Activated naive CD8-positive, alpha-beta T cell treated with anti-CD3 and anti-CD28 coated beads, Interleukin-2, amount 10 ng/mL, durations not matched to agents 7 days and 5 days (primary cell): ENCODE measurements at regions of chr17 and their contacts with region 1.

Region 1: DNA sequence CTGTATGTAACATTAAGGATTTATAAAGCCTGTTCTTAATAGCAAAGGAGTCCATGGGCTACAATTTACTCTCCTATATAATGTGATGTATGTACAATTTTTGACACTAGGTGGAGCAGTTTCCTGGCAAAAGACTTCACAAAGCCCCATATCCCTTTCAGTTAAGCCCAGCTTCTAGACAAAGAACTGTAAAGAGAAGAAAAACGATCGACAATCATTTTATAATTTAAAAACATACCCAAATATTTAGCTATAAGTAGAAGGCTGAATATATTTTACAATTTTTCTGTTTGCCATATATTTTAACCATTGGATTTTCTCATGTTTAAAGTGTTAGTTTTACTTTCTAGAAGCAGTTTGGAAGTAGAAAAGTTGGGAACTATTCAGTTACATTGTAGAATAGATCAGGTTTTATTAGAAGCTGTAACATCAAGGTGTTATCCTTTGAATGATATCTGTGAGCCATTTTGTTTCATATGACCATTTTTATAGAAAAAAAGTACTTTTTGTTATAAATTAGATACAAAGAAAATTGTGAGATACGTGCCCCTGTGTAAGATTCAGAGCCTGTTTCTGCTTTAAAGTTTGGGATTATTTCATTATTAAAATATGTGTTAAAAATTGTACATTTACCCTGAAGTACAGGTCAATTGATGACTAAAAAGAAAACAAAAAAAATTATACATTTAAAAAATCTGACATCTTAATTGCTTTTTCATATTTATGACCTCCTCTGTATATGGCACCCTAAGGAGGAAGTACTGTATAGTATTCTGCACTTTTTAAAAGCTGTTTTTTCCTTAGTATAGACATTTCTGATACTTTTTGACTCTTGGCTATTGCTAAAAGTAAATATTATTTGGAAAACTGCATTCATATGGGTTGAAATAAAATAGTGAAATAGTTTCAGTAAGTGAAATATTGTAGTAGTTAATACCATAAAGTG is 46.3 kb downstream of the VMP1 start:
- DNase-seq: no peak
- ATAC-seq: peak; percentile 88
- H3K4me3 Mint-ChIP-seq: peak overlapping the region; percentile 62
- H3K27ac Mint-ChIP-seq: peak overlapping the region; percentile 85
- H3K4me1 Mint-ChIP-seq: peaks cover 39% of the 10 kb centered on the region
- H3K27me3 Mint-ChIP-seq: no peaks in the 10 kb centered on the region

Region 2: GRCh38 chr17:59712862-59713261 is 40.9 kb before region 1 on chr17:
- POLR2A ChIA-PET with region 1: no interaction called
- DNase-seq: no peak
- ATAC-seq: no peak
- H3K4me3 Mint-ChIP-seq: no peak overlapping the region
- H3K27ac Mint-ChIP-seq: no peak overlapping the region
- H3K4me1 Mint-ChIP-seq: peaks cover 23% of the 10 kb centered on the region
- H3K27me3 Mint-ChIP-seq: no peaks in the 10 kb centered on the region

Region 3: DNA sequence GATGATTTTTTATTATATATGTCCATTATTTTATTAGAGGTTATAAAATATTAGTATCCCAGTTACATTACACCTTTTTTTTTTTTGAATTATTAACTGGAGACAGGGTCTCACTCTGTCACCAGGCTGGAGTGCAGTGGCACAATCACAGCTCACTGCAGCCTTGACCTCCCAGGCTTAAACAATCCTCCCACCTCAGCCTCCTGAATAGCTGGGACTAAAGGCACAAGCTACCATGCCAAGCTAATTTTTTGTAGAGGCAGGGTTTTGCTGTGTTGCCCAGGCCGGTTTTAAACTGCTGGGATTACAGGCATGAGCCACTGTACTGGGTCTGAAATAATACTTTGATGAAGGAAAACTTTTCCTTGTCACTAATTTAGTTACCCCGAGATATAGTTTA is 17.3 kb after region 1 on chr17:
- POLR2A ChIA-PET with region 1: no interaction called
- DNase-seq: no peak
- ATAC-seq: no peak
- H3K4me3 Mint-ChIP-seq: no peak overlapping the region
- H3K27ac Mint-ChIP-seq: no peak overlapping the region
- H3K4me1 Mint-ChIP-seq: peaks cover 4% of the 10 kb centered on the region
- H3K27me3 Mint-ChIP-seq: no peaks in the 10 kb centered on the region

Region 4: GRCh38 chr17:59786536-59787319 is 32.9 kb after region 1 on chr17:
- POLR2A ChIA-PET with region 1: interaction called, 11 read pairs
- DNase-seq: no peak
- ATAC-seq: peak; percentile 88
- H3K4me3 Mint-ChIP-seq: peak overlapping the region; percentile 88
- H3K27ac Mint-ChIP-seq: peak overlapping the region; percentile 94
- H3K4me1 Mint-ChIP-seq: peaks cover 44% of the 10 kb centered on the region
- H3K27me3 Mint-ChIP-seq: no peaks in the 10 kb centered on the region

Region 5: GRCh38 chr17:59815965-59816364 is 62.2 kb after region 1 on chr17:
- POLR2A ChIA-PET with region 1: no interaction called
- DNase-seq: no peak
- ATAC-seq: no peak
- H3K4me3 Mint-ChIP-seq: no peak overlapping the region
- H3K27ac Mint-ChIP-seq: no peak overlapping the region
- H3K4me1 Mint-ChIP-seq: peaks cover 28% of the 10 kb centered on the region
- H3K27me3 Mint-ChIP-seq: no peaks in the 10 kb centered on the region

Region 6: DNA sequence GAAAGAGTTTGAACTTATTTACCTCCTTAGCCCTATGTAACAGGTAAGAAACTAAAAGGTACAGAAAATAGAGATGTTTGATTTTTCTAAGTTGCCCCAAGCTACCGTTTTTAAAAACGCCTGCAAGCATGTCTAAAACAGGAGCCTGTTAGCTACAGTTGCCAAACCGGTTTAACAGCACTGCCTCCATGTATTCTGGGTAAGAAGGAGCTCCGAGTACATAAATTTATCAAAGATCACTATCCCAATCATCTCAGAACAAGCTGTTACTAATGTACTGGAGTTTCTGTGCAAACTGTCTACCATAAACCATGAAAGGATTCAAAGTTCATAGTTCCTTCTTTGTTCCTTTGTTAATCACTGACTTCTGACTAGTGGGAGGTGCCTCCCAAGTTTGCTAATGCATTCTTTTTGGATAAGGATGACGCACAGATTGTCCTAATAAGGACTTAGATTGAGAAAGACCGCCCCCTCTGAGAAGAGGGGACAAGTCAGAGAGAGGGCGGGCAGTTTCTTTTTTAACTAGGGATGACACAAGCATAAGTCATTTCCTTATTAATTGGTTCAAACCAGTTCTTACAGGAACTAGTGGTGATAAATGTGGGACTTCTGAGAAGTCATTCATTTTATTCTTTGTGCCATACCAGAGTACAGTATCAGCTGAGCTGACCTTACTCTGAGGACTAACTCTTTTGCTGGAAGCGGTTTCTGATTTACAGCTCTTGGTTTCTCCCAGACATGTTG is 83.7 kb after region 1 on chr17:
- POLR2A ChIA-PET with region 1: interaction called, 27 read pairs
- DNase-seq: no peak
- ATAC-seq: peak; percentile 93
- H3K4me3 Mint-ChIP-seq: peak overlapping the region; percentile 90
- H3K27ac Mint-ChIP-seq: peak overlapping the region; percentile 94
- H3K4me1 Mint-ChIP-seq: peaks cover 33% of the 10 kb centered on the region
- H3K27me3 Mint-ChIP-seq: no peaks in the 10 kb centered on the region

Region 7: GRCh38 chr17:59846394-59847165 is 92.8 kb after region 1 on chr17:
- POLR2A ChIA-PET with region 1: interaction called, 12 read pairs
- DNase-seq: no peak
- ATAC-seq: peak; percentile 42
- H3K4me3 Mint-ChIP-seq: peak overlapping the region; percentile 18
- H3K27ac Mint-ChIP-seq: peak overlapping the region; percentile 71
- H3K4me1 Mint-ChIP-seq: peaks cover 51% of the 10 kb centered on the region
- H3K27me3 Mint-ChIP-seq: no peaks in the 10 kb centered on the region

Region 8: DNA sequence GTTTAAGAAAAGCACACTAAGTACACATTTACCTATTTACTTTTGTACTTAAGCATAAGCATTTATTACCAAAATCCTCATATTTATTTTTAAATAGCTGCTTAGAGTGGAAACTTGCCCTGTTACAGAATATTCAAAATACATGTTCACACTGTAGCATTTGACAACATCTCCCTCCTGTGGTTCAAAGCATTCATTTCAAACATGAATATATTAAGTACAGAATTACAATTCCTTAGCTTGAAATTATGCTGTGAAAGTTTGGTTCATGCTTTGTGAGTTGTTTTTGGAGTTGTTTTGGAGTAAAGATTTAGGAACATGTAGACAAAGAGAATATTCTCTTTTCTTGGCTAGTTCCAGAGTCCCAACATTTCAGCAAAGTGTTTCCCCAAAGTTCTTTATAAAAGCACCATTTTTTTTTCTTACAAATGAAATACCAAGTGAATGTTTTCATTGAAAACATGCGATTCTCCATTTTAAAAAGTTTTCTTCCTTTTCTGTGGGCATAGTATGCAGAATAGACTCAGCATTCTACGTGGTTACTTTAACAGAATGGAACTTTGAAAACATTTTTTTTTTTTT is 105.7 kb after region 1 on chr17:
- POLR2A ChIA-PET with region 1: interaction called, 11 read pairs
- DNase-seq: no peak
- ATAC-seq: peak; percentile 72
- H3K4me3 Mint-ChIP-seq: no peak overlapping the region
- H3K27ac Mint-ChIP-seq: no peak overlapping the region
- H3K4me1 Mint-ChIP-seq: peaks cover 12% of the 10 kb centered on the region
- H3K27me3 Mint-ChIP-seq: no peaks in the 10 kb centered on the region